ENCODE measurements at regions of chr7 and their contacts with region 1.

Region 1: DNA sequence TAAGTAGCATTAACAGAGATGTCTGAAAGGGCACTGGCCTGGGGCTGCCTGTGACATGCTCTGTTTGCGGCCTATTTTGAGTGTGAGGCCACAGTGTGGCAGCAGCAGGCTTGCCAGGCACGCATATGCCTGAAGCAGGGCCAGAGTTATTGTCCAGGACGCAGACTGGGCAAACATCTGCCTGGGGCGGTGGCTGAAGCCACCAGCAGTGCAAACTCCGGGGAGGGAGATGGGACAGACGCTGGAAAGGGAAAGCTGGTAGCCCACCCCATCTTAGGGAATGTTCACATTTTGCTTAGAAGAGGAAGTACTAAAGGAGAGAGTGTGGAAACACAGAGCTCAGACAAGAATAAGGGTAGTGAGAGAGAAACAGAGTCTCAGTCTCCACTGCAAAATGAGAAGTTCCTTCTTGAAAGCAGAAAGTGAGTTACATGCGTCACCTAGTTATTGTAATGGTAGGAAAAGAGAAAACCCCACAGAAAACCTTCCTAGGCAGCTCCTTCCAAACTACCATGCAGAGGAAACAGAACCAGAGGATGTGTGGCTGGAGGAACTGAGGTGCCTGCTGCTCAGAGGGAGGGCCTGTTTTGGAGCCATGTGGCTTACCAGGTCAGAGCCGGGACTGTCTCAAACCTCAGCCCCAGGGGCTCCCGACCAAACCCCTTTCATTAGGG is 14.6 kb downstream of the AKR1B1 start:
- DNase-seq: no peak
- H3K4me3 ChIP-seq: no peak overlapping the region
- H3K27ac ChIP-seq: no peak overlapping the region
- H3K4me1 ChIP-seq: peaks cover 0 to 18% (median 16%) of the 10 kb centered on the region in 4 experiments
- H3K27me3 ChIP-seq: no peaks in the 10 kb centered on the region

Region 2: DNA sequence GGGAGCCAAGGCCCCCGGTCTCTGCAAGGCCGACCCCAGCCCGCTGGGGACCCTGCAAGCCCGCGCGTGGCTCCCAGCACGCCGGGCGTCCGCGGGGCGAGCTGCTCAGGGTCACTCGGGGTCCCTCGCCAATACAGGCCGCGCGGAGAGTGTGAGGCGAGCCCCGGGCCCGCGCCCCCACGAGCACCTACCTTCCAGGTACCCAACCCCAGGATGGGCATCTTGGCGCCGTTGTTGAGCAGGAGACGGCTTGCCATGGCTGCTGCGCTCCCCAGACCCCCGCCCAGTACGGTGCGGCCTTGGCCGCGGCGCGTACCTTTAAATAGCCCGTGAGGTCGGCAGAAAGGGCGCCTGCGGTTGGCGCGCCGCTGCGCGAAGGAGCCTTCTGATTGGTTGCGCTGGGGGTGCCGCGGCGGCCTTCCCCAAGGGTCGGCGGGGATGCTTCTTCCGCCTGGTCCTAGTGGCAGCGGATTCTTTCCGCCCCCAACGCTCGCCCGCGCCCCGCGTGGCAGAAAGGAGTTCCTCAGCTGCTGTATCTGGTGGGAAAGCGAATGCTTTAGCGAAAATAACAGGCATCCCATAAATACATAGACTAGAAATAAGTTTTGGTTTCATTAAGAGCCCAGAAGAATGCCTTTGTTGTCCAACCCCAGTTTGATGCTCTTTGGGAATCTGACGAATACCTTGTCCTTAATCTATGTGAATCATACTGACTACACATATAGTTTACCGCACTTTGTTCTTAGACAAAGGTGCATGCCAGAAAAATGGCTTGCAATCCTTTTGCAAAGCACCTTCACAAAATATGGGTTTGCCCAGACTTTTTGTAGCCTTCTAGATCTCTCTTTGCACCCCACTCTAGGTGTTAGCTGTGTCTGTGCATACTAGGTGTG is 14.7 kb after region 1 on chr7 and contains the start of gene AKR1B1:
- CTCF ChIA-PET with region 1: interaction called, 17 read pairs
- POLR2A ChIA-PET with region 1: no interaction called
- DNase-seq: peak; percentile 94 to 98 (median 97)
- H3K4me3 ChIP-seq: peak within 1 kb of the TSS; percentile 68 to 88 (median 84)
- H3K27ac ChIP-seq: peak within 1 kb of the TSS in 1 of 2 experiments; percentile 61
- H3K4me1 ChIP-seq: peaks cover 7 to 27% (median 17%) of the 10 kb centered on the region in 4 experiments
- H3K27me3 ChIP-seq: no peaks in the 10 kb centered on the region

Region 3: DNA sequence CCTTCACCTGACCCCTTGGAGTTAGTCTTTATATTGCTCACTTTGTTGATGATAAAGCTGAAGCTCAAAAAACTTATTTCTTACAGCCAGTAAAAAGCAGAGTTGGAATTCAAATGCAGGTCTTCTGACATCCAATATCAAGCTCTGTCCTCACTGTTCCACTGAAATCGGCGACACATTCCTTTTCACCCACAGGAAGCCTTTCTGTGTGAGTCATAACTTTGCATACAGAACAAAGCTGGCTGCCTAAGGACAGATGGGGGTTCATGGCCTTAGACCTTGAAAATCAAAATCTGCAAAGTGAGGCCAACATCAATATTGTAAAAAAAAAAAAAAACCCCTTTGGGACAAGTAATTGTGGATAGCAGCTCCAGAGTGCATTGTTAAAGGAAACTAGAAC is 36.4 kb after region 1 on chr7:
- CTCF ChIA-PET with region 1: no interaction called
- POLR2A ChIA-PET with region 1: no interaction called
- DNase-seq: peak in 1 of 3 donors; percentile 10
- H3K4me3 ChIP-seq: no peak overlapping the region
- H3K27ac ChIP-seq: no peak overlapping the region
- H3K4me1 ChIP-seq: no peaks in the 10 kb centered on the region
- H3K27me3 ChIP-seq: no peaks in the 10 kb centered on the region